ENCODE measurements at regions of chr4 and their contacts with region 1.

Region 1: DNA sequence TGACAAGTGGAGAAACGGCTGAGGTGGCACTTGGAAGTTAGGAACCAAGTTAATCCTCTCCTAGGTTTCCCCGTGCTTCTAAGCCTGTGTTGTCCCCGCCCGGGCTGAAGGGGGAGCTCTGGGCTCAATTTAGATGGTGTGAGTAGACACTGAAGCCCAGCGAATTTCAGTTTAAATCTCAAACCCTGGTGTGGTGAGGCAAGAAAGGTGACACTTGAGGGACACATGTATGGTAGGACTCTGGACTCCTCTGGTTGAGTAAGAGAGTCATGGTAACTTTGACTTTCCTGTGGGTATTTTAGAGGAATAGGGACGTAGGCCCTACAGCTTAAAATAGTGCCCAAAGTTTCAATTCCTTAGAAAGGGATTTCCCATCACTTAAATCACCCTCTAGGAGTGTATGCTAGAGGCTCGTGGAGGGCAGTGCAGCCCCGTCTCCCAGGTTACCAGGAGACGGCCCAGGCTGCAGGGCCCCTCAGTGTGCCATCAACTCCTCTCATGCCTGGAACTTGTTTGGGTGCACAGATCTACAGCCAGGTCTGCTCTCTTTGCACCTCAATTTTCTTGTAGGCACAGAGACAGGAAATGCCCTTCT is 24.0 kb downstream of the HAND2 start:
- DNase-seq: peak; percentile 77
- ATAC-seq: peak; percentile 75
- H3K4me3 Mint-ChIP-seq: peak overlapping the region; percentile 4
- H3K27ac Mint-ChIP-seq: no peak overlapping the region
- H3K4me1 Mint-ChIP-seq: peaks cover 35% of the 10 kb centered on the region
- H3K27me3 Mint-ChIP-seq: peaks cover 81% of the 10 kb centered on the region

Region 2: DNA sequence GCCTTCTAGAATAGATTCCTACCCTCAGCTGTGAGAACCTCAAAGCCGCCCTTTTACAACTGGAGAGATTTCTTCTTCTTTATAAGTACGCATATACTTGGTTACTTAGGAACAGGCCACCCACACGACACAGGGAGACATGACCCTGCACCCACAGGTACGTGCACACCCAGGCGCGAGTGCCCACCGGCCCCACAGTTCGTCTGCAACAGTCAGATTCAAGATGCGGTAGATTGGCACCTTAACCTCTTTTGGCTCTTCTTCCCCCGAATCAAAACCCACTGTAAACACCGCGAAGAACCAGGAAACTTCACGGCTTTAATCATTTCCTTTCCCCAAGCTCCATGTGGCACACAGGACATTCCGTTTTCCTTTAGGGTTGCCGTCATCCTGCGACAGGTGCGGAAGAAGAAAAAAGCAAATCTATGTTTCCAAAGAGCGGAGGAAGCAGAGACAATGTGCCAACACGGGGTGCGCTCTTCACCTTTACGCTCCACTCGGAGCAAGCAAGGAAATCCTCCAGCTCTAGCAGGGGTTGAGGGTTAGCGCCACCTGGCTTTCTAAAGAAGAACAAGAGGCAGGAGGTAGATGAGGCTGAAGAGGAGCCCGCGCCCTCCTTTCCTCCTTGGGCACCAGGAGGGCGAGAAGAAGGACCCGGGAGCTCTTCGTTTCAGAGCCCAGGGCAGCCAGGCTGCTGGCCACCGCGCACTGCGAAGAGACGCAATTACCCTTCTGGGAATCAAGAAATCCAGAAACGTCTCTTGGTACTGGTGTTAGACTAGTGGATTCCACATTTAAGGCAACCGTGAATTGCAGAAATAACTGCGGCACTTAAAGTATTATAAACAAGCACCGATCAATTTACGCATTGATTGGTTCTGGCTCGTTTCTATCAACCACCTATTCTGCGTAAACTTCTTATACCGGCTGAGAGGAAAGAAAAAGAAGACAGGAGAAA is 11.7 kb before region 1 on chr4:
- CTCF ChIA-PET with region 1: interaction called, 13 read pairs
- POLR2A ChIA-PET with region 1: no interaction called
- intact Hi-C with region 1: no loop called
- DNase-seq: peak; percentile 79
- ATAC-seq: peak; percentile 97
- H3K4me3 Mint-ChIP-seq: peak overlapping the region; percentile 69
- H3K27ac Mint-ChIP-seq: peak overlapping the region; percentile 17
- H3K4me1 Mint-ChIP-seq: peaks cover 10% of the 10 kb centered on the region
- H3K27me3 Mint-ChIP-seq: peaks cover 33% of the 10 kb centered on the region

Region 3: GRCh38 chr4:173669460-173670179 is 163.6 kb after region 1 on chr4:
- CTCF ChIA-PET with region 1: no interaction called
- POLR2A ChIA-PET with region 1: no interaction called
- intact Hi-C with region 1: no loop called
- DNase-seq: no peak
- ATAC-seq: no peak
- H3K4me3 Mint-ChIP-seq: no peak overlapping the region
- H3K27ac Mint-ChIP-seq: no peak overlapping the region
- H3K4me1 Mint-ChIP-seq: no peaks in the 10 kb centered on the region
- H3K27me3 Mint-ChIP-seq: no peaks in the 10 kb centered on the region

Region 4: DNA sequence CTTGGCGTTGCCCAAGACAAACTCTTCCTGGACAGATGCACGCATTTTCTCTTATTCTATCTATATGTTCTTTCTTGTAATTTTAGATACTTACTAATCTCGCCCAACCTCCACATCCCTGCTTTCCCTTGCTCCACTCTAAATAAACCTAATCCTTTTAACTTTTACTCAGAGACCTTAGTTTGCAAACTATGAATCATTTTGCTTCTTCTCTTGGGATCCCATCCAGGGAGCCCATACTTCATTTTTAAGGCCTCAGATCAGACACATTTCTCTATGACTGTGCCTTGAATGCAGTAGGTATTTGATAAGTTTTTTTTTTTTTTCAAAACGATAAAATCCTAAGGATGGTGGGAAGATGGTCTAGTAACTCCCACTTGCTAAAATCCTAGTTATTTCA is 377.8 kb after region 1 on chr4:
- CTCF ChIA-PET with region 1: no interaction called
- POLR2A ChIA-PET with region 1: no interaction called
- intact Hi-C with region 1: loop called in 1 of 2 experiments (anchors 1 kb)
- DNase-seq: no peak
- ATAC-seq: no peak
- H3K4me3 Mint-ChIP-seq: no peak overlapping the region
- H3K27ac Mint-ChIP-seq: no peak overlapping the region
- H3K4me1 Mint-ChIP-seq: no peaks in the 10 kb centered on the region
- H3K27me3 Mint-ChIP-seq: no peaks in the 10 kb centered on the region

Region 5: DNA sequence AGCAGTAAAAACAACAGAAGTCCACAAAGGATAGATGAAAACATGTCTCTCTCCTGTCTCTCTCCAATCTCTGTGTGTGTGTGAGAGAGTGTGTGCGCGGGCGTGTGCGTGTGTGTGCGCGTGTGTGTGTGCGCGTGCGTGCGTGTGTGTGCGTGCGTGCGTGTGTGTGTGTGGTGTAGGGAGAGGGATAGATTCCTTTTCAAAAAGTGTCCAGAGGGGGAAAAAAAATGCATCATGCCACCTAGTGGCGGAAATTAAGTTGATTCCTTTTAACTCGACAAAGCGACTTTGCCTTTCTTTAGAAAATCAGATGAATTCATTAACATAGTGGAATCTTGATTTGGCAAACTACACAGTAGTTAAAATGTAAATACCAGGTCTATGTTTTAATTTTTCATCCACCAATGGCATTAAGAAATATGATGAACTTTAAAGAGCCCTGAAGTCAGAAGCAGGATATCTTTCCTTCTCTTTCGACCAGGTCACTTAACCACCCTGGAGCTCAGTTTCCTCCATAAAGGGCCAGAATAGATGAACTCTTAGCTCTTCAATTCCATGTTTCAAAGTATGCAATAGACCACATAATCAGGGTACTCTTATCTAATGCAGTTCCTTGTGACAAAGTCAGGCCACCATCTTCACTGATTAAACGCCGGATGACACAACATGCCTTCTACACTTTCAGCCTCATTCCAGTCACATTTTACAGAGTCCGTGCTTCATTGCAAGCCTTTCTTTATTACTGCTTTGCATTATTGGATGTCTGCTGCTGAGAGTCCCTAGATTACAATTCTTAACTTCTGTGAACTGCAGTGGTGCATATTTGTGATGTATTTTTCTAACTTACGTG is 614.6 kb after region 1 on chr4:
- CTCF ChIA-PET with region 1: interaction called, 10 read pairs
- POLR2A ChIA-PET with region 1: no interaction called
- intact Hi-C with region 1: loop called (anchors 1 kb)
- DNase-seq: peak; percentile 49
- ATAC-seq: peak; percentile 42
- H3K4me3 Mint-ChIP-seq: no peak overlapping the region
- H3K27ac Mint-ChIP-seq: no peak overlapping the region
- H3K4me1 Mint-ChIP-seq: peaks cover 2% of the 10 kb centered on the region
- H3K27me3 Mint-ChIP-seq: peaks cover 38% of the 10 kb centered on the region

Region 6: DNA sequence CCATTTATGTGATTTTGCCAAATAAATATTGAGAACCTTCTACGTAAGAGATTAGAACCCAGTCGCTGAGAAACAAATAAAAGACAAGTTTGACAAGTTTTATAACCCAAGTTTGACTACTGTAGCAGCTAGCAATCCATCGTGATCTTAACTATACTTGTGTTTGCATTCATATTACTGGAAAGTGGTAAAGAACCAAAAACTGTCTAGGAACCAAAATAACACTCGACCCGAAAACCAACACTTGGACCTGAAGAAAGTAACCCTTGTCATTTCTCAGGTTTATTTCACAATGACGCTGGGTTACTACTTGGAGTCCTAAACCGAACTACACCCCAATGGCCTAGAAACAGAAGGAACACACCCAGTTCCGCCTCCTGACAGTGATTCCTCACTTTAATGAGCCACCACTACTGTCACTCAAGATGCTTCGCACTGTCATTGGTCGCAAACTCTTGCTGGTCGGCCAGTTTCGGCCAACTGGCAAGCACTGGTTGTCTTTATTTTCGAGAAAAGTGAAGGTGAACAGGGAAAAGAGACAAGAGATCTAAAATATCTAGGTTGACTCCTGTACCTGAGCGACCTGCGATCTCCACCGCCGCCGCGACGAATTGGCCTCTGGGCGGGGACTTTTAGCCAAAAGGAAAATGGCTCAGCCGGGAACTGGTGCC is 777.0 kb after region 1 on chr4:
- CTCF ChIA-PET with region 1: interaction called, 3 read pairs
- POLR2A ChIA-PET with region 1: no interaction called
- intact Hi-C with region 1: loop called in 1 of 2 experiments (anchors 10 kb)
- DNase-seq: peak; percentile 84
- ATAC-seq: peak; percentile 97
- H3K4me3 Mint-ChIP-seq: peak overlapping the region; percentile 98
- H3K27ac Mint-ChIP-seq: peak overlapping the region; percentile 100
- H3K4me1 Mint-ChIP-seq: peaks cover 64% of the 10 kb centered on the region
- H3K27me3 Mint-ChIP-seq: no peaks in the 10 kb centered on the region